ENCODE measurements at regions of chr3 and their contacts with region 1.

Region 1: DNA sequence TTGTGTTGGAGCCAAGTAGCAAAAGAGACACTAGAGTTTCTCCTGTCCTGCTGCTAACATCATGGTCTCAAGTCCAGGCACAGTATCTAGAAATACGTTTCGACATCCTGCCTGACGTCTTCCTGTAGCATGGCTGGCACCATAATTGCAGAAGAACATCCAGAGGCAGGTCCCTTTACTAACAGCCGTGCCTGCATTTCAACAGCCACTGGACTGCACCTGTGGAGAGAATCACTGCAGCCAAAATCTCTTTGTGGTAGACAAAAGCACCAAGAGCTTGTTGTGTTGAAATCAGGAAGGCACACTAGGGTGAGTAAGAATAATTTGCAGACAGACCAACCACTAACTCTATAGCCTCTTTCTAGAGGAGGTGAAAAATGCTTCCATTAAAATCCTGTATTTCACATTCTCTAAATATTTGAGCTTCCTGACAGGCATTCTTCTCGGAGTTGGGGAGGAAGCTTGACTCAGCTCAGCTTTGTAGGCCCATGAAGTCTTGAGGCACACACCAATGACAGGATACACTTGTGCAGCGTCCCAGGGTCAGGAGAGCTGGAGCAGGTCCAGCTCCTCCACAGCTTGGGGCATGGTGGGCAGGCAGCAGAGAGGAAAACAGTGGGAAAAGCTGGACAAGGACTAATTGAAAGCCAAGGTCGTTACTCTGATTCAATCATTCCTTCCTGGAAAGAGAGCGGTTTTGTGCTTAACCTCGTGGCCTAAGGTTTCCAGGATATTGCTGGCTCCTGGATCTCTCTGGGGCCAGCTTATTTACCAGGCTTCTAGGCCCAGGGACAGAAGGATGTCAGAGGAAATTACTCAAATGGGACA is 244.9 kb downstream of the FAM43A start:
- DNase-seq: peak; percentile 64 to 75 (median 72)
- H3K4me3 ChIP-seq: peak overlapping the region in 1 of 3 experiments; percentile 13
- H3K4me3 Mint-ChIP-seq: no peak overlapping the region
- H3K27ac ChIP-seq: peak overlapping the region; percentile 56 to 75
- H3K27ac Mint-ChIP-seq: peak overlapping the region; percentile 59 to 94 (median 88)
- H3K4me1 ChIP-seq: peaks cover 63 to 64% of the 10 kb centered on the region in 2 donors
- H3K4me1 Mint-ChIP-seq: peaks cover 71% of the 10 kb centered on the region
- H3K27me3 ChIP-seq: no peaks in the 10 kb centered on the region
- H3K27me3 Mint-ChIP-seq: peaks cover 0 to 5% (median 0%) of the 10 kb centered on the region in 3 donors
- CTCF ChIP-seq: no peak

Region 2: DNA sequence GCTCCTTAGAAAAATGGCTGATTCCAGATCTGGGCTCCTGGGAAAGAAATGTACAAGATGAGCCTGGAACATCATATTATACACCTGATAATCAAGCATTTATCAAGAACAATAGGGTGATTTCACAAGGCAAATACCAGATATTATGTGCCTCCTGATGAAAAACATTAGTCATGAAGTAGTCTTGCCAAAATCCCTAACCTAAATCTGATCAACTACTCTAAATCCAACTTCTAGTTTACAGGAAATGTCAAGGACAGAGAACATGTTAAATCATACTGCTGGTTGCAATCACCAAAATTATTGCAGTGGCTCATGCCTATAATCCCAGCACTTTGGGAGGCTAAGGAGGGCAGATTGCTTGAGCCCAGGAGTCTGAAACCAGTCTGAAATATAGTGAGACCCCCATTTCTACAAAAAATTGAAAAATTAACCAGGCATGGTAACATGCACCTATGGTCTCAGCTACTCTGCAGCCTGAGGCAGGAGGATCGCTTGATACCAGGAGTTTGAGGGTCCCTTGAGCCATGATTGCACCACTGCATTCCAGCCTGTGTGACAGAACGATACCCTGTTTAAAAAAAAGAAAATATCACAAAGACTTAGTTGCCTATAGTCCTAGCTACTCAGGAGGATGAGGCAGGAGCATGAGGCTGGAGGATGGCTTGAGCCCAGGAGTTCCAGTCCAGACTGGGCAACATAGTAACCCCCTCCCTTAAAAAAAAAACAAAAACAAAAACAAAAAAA is 408.9 kb before region 1 on chr3:
- intact Hi-C with region 1: no loop called
- DNase-seq: no peak
- H3K4me3 ChIP-seq: no peak overlapping the region
- H3K4me3 Mint-ChIP-seq: no peak overlapping the region
- H3K27ac ChIP-seq: no peak overlapping the region
- H3K27ac Mint-ChIP-seq: peak overlapping the region in 1 of 7 donors; percentile 55
- H3K4me1 ChIP-seq: peaks cover 6 to 7% of the 10 kb centered on the region in 2 donors
- H3K4me1 Mint-ChIP-seq: peaks cover 5% of the 10 kb centered on the region
- H3K27me3 ChIP-seq: no peaks in the 10 kb centered on the region
- H3K27me3 Mint-ChIP-seq: peaks cover 0 to 5% (median 3%) of the 10 kb centered on the region in 3 donors
- CTCF ChIP-seq: no peak

Region 3: GRCh38 chr3:194879991-194880939 is 50.3 kb before region 1 on chr3:
- intact Hi-C with region 1: loop called (anchors 5 to 10 kb)
- DNase-seq: peak in 2 of 3 donors; percentile 23
- H3K4me3 ChIP-seq: peak overlapping the region in 1 of 3 experiments; percentile 56
- H3K4me3 Mint-ChIP-seq: peak overlapping the region in 1 of 2 donors; percentile 53
- H3K27ac ChIP-seq: peak overlapping the region; percentile 74 to 85
- H3K27ac Mint-ChIP-seq: peak overlapping the region; percentile 89 to 95 (median 92)
- H3K4me1 ChIP-seq: peaks cover 48 to 51% of the 10 kb centered on the region in 2 donors
- H3K4me1 Mint-ChIP-seq: peaks cover 52% of the 10 kb centered on the region
- H3K27me3 ChIP-seq: no peaks in the 10 kb centered on the region
- H3K27me3 Mint-ChIP-seq: peaks cover 0 to 2% (median 1%) of the 10 kb centered on the region in 3 donors
- CTCF ChIP-seq: no peak

Measured in CD14-positive monocyte (primary cell).